ENCODE measurements at regions of chr9 and their contacts with region 1.

Region 1: DNA sequence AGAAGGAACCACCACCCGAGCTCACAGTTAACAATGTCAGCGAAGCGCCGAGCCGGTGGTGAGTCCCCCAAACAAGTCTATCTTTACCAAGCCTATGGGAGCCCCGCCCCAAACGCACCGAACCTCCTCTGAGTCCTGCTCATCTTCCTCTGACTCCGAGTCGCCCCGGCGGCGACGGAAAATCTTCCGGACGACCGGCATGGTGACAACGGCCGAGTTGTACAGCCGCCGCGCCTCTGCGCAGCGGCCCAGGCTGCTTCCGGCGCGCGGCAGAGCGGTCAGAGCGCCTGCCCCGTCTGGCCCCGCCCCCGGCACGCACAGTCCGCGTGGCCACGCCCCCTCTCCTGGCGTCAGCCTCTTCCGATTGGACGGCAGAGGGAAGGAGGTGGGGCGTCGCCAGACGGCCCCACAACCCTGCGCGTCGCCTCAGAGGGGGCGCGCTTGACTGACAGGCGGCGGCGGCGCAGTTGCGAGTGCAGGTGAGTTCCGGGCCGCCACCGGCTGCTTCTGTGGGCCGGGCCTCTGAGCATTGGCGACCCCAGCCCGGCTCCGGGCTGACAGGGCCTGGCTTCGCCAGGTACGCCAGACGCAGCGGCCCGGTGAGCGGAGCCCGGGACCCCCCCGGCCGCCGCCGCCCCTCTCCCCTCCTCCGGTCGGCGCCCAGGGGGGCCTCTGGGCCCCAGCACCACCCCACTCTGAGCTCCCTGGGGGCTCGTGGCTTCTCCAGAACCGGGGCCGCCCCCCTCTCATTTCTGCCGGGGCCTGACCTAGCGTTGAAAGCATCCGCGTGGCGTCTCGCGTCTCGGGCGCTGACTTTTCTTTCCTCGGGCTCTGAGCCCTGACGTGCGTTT is at the starts of genes C9orf78 and USP20:
- DNase-seq: peak; percentile 97
- H3K4me3 Mint-ChIP-seq: peak within 1 kb of the TSS; percentile 99
- H3K27ac Mint-ChIP-seq: peak within 1 kb of the TSS; percentile 96
- H3K4me1 Mint-ChIP-seq: peaks cover 59% of the 10 kb centered on the region
- H3K27me3 Mint-ChIP-seq: no peaks in the 10 kb centered on the region
- total RNA-seq, gene C9orf78: 61.6 to 66.2 TPM
- total RNA-seq, gene USP20: 86.4 to 87.6 TPM

Region 2: DNA sequence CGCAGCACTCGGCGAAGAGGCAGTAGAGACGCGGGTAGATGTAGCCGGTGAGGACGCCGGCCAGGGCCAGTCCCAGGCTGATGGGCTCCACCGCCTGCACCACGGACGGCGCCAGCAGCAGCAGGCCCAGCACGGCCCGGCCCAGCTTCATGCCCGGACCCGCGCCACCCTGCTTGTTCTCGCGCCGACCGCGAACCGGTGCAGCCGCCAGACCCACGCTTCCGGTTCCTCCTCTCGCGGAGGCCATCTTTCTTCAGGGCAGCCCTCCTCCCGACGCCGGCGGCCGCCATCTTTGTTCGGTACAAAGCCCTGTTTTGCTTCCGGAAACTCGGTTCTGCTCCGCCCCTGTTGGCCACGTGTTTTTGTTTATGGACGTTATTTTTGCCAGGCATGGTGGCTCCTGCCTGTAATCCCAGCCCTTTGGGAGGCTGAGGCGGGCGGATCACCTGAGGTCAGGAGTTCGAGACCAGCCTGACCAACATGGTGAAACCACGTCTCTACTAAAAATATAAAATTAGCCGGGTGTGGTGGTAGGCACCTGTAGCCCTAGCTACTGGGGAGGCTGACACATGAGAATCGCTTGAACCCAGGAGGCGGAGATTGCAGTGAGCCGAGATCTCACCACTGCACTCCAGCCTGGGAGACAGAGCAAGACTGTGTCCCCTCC is 11.2 kb before region 1 on chr9 and contains the start of gene TOR1A:
- CTCF ChIA-PET with region 1: no interaction called
- POLR2A ChIA-PET with region 1: interaction called, 50 read pairs
- DNase-seq: peak; percentile 95
- H3K4me3 Mint-ChIP-seq: peak within 1 kb of the TSS; percentile 82
- H3K27ac Mint-ChIP-seq: peak within 1 kb of the TSS; percentile 76
- H3K4me1 Mint-ChIP-seq: peaks cover 15% of the 10 kb centered on the region
- H3K27me3 Mint-ChIP-seq: no peaks in the 10 kb centered on the region
- total RNA-seq, gene TOR1A: 54.6 to 56.9 TPM

Region 3: GRCh38 chr9:129863059-129863690 is 27.9 kb after region 1 on chr9:
- CTCF ChIA-PET with region 1: interaction called, 6 read pairs
- POLR2A ChIA-PET with region 1: interaction called, 145 read pairs
- DNase-seq: peak; percentile 92
- H3K4me3 Mint-ChIP-seq: peak overlapping the region; percentile 35
- H3K27ac Mint-ChIP-seq: peak overlapping the region; percentile 90
- H3K4me1 Mint-ChIP-seq: peaks cover 78% of the 10 kb centered on the region
- H3K27me3 Mint-ChIP-seq: no peaks in the 10 kb centered on the region

Region 4: DNA sequence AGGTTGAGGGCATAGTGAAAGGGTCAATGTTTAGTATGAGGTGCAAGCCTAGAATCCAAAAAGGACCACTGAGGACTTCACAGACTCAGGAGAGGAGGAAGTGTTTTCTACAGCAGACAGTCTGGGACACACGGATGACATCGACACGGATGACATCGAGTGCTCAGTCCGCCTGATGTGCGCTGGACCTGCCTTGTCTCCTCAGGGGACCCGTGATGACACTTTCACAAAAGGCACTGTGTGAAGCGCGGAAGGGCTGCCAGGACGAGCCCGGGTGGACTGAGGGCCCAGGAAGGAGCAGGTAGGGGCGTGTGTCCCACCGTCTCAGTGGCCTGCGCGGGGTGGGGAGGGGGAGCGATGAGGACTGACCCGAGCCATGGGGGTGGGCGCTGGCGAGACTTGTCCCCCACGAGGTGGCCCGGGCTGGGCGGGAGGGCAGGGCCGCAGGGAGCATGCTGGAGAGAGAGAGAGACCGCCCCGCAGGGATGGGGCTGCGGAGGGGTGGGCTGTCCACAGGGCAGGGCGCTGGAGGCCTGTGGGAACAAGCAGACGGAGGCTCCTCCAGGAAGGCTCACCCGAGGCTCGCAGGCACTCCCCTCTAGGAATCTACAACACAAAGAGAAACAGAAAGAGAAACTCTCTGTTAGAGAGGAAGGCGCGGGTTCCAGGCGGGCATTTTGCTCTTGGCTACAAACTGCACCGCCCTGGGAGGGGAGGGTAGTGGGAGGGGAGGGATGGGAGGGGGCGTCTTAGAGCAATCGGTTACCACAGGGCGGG is 54.9 kb after region 1 on chr9:
- CTCF ChIA-PET with region 1: interaction called, 10 read pairs
- POLR2A ChIA-PET with region 1: interaction called, 98 read pairs
- DNase-seq: peak; percentile 86
- H3K4me3 Mint-ChIP-seq: peak overlapping the region; percentile 80
- H3K27ac Mint-ChIP-seq: peak overlapping the region; percentile 100
- H3K4me1 Mint-ChIP-seq: peaks cover 89% of the 10 kb centered on the region
- H3K27me3 Mint-ChIP-seq: no peaks in the 10 kb centered on the region

Region 5: DNA sequence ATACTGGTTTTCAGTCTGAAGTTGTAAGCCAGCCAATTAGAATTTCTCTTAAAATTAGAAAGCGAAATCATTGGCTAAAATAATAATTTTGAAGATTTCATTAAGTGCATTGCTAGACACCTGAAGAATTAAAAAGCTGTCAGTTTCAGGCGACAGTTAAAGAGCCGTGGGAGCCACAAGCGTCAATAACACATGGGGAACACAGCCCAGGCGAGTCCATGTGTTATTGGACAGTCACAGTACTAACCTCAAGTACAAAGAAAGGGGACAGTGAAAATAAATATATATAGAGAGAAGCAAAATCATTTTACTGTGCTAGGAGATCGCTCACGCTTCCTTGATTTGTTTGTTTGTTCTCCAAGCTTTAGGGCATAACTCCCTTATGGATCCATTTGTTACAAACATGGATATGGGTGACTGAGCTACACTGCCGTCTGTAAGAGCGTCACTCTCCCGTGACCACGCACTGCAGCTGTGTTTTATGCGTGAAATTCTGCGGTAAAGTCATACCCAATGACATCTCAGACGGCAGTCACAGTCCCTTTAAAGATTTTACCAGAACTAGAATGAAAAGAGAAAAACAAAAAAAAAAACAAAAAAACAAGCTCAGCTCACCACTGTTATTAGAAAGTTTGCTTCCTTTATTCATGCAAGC is 83.2 kb after region 1 on chr9:
- CTCF ChIA-PET with region 1: no interaction called
- POLR2A ChIA-PET with region 1: no interaction called
- DNase-seq: no peak
- H3K4me3 Mint-ChIP-seq: no peak overlapping the region
- H3K27ac Mint-ChIP-seq: peak overlapping the region; percentile 60
- H3K4me1 Mint-ChIP-seq: peaks cover 41% of the 10 kb centered on the region
- H3K27me3 Mint-ChIP-seq: no peaks in the 10 kb centered on the region

Measured in activated CD4-positive, alpha-beta memory T cell treated with anti-CD3 and anti-CD28 coated beads, Interleukin-2, amount 10 ng/mL, durations not matched to agents 7 days and 5 days (primary cell).